ENCODE measurements at regions of chr16 and their contacts with region 1.

Region 1: GRCh38 chr16:30032083-30032819 is 1.2 kb upstream of the TLCD3B start:
- DNase-seq: peak; percentile 51 to 86
- H3K4me3 ChIP-seq: peak overlapping the region in 1 of 4 experiments; percentile 90; a peak in 3 of 8 replicates
- H3K27ac ChIP-seq: no peak overlapping the region
- H3K4me1 ChIP-seq: peaks cover 0 to 26% (median 19%) of the 10 kb centered on the region in 4 experiments; a peak in 6 of 7 replicates
- H3K27me3 ChIP-seq: peaks cover 0 to 14% (median 5%) of the 10 kb centered on the region in 4 experiments; a peak in 2 of 7 replicates
- CTCF ChIP-seq: peak; percentile 71 to 93 (median 89)
- EP300 ChIP-seq: peak in 1 of 2 experiments; percentile 20; a peak in 1 of 3 replicates
- POLR2A ChIP-seq: no peak
- RAD21 ChIP-seq: peak; percentile 92 to 95

Region 2: DNA sequence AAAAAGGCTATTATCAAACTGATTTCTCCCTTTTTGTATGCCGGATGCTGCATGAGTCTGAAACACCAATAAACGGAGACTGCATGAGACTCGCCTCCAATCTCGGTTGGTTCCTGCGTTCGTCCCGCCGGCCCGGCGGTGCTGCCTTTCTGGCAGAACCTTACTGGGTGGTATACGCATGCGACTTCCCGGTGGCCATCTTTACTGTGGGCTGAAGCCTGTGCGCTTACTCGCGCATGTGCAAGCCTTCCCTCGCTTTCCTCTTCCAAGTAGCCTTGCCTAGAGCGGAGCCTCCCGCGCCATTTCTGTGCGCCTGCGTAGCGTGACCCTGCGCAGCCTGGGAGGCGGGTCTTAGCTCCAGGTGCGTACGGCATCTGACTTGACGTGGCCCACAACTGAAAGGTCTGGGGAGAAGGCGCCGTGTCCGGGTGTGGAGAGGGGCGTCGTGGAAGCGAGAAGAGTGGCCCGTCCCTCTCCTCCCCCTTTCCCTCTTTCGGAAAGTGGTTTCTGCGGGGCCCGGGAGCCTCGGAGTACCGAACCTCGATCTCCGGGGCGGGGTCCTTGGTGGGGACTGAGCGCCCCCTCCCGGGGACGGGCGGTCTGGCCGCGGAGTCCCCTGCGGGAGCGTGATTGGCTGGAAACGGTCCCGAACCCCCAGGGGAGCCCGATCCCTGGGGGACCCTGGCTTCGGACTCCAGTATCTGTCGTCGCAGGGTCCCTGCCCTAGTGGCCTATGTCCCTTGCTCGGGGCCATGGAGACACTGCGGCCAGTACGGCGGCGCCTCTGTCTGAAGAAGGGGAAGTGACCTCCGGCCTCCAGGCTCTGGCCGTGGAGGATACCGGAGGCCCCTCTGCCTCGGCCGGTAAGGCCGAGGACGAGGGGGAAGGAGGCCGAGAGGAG is 216.2 kb before region 1 on chr16 and contains the start of gene PAGR1:
- CTCF ChIA-PET with region 1: interaction called, 13 read pairs
- POLR2A ChIA-PET with region 1: interaction called, 4 read pairs
- DNase-seq: peak; percentile 98
- H3K4me3 ChIP-seq: peak within 1 kb of the TSS; percentile 59 to 91 (median 83)
- H3K27ac ChIP-seq: peak within 1 kb of the TSS; percentile 94; the same call in 1 of the 2 replicates
- H3K4me1 ChIP-seq: peaks cover 0 to 36% (median 23%) of the 10 kb centered on the region in 4 experiments; a peak in 6 of 7 replicates
- H3K27me3 ChIP-seq: no peaks in the 10 kb centered on the region
- CTCF ChIP-seq: peak in 2 of 3 experiments; percentile 71 to 78; a peak in 3 of 4 replicates
- EP300 ChIP-seq: no peak
- POLR2A ChIP-seq: peak in 1 of 2 experiments; percentile 86; a peak in 2 of 3 replicates
- RAD21 ChIP-seq: peak; percentile 60 to 72
- total RNA-seq, gene PAGR1: 56.4 and 56.6 TPM in 2 replicates

Region 3: GRCh38 chr16:29900102-29900887 is 132.0 kb before region 1 on chr16 and contains the start of gene ASPHD1:
- CTCF ChIA-PET with region 1: interaction called, 12 read pairs
- POLR2A ChIA-PET with region 1: interaction called, 7 read pairs
- DNase-seq: peak; percentile 25 to 89
- H3K4me3 ChIP-seq: peak within 1 kb of the TSS; percentile 59 to 99 (median 90)
- H3K27ac ChIP-seq: peak within 1 kb of the TSS; percentile 67
- H3K4me1 ChIP-seq: peaks cover 0 to 14% (median 3%) of the 10 kb centered on the region in 4 experiments; a peak in 6 of 7 replicates
- H3K27me3 ChIP-seq: no peaks in the 10 kb centered on the region
- CTCF ChIP-seq: no peak
- EP300 ChIP-seq: no peak
- POLR2A ChIP-seq: no peak
- RAD21 ChIP-seq: no peak
- total RNA-seq, gene ASPHD1: 17.8 and 18.6 TPM in 2 replicates

Region 4: DNA sequence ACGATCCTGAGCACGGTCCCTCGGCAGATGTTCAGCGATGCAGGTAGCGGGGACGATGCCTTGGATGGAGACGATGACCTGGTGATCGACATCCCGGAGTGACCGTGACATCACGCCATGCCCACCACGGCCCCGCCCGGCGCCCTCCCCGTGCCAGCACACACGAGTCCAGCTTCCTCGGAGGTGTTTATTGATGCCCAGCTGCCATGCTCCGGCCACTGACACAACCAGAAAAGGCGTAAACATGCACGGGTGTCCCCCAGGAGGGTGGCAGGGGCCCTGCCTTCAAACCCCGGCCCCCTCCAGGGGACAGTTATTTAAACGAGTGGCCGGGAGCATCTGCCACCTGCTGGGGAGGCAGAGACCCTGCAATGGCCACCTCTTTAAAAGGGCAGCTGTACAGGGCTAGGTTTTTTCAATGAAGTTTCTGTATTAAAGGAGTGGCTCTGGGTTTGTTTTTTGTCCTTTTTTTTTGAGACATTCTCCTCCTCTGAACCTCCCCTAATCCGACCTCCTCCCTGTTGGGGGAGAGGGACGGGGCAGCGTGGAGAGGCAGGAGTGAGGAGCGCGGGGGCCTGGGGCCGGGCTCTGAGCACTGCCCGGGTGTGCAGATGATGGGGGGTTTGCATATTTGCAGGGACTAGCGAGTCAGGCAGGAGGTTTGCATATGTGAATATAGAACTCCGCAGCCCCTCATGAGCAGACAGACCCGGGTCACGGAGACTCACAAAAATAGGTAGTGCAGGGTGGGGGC is 26.7 kb before region 1 on chr16:
- CTCF ChIA-PET with region 1: interaction called, 18 read pairs
- POLR2A ChIA-PET with region 1: interaction called, 10 read pairs
- DNase-seq: no peak
- H3K4me3 ChIP-seq: no peak overlapping the region
- H3K27ac ChIP-seq: no peak overlapping the region
- H3K4me1 ChIP-seq: peaks cover 0 to 22% (median 11%) of the 10 kb centered on the region in 4 experiments; a peak in 6 of 7 replicates
- H3K27me3 ChIP-seq: peaks cover 0 to 13% (median 8%) of the 10 kb centered on the region in 4 experiments; a peak in 4 of 7 replicates
- CTCF ChIP-seq: peak in 2 of 3 experiments; percentile 60 to 71; a peak in 3 of 4 replicates
- EP300 ChIP-seq: no peak
- POLR2A ChIP-seq: no peak
- RAD21 ChIP-seq: peak; percentile 29 to 50; a peak in 3 of 4 replicates

Region 5: GRCh38 chr16:30018731-30019158 is 13.5 kb before region 1 on chr16:
- CTCF ChIA-PET with region 1: interaction called, 13 read pairs
- POLR2A ChIA-PET with region 1: interaction called, 6 read pairs
- DNase-seq: no peak
- H3K4me3 ChIP-seq: no peak overlapping the region
- H3K27ac ChIP-seq: no peak overlapping the region
- H3K4me1 ChIP-seq: no peaks in the 10 kb centered on the region; a peak in 1 of 7 replicates
- H3K27me3 ChIP-seq: no peaks in the 10 kb centered on the region
- CTCF ChIP-seq: no peak
- EP300 ChIP-seq: no peak
- POLR2A ChIP-seq: no peak
- RAD21 ChIP-seq: no peak

Region 6: GRCh38 chr16:30065143-30065850 is 33.0 kb after region 1 on chr16 and contains the start of gene ALDOA:
- CTCF ChIA-PET with region 1: interaction called, 16 read pairs
- POLR2A ChIA-PET with region 1: interaction called, 25 read pairs
- DNase-seq: peak; percentile 89 to 92
- H3K4me3 ChIP-seq: peak within 1 kb of the TSS; percentile 71 to 92 (median 88)
- H3K27ac ChIP-seq: peak within 1 kb of the TSS; percentile 84
- H3K4me1 ChIP-seq: peaks cover 6 to 27% (median 15%) of the 10 kb centered on the region in 4 experiments
- H3K27me3 ChIP-seq: no peaks in the 10 kb centered on the region
- CTCF ChIP-seq: no peak
- EP300 ChIP-seq: no peak; a peak in 1 of 3 replicates
- POLR2A ChIP-seq: peak; percentile 93 to 95
- RAD21 ChIP-seq: no peak
- total RNA-seq, gene ALDOA: 1,083 and 1,146 TPM in 2 replicates

Region 7: GRCh38 chr16:30183233-30184095 is 151.2 kb after region 1 on chr16 and contains the start of gene CORO1A:
- CTCF ChIA-PET with region 1: no interaction called
- POLR2A ChIA-PET with region 1: no interaction called
- DNase-seq: peak in 1 of 2 experiments; percentile 91
- H3K4me3 ChIP-seq: peak within 1 kb of the TSS; percentile 50 to 69 (median 54)
- H3K27ac ChIP-seq: no peak within 1 kb of the TSS
- H3K4me1 ChIP-seq: peaks cover 0 to 12% (median 4%) of the 10 kb centered on the region in 4 experiments; a peak in 4 of 7 replicates
- H3K27me3 ChIP-seq: peaks cover 0 to 22% (median 12%) of the 10 kb centered on the region in 4 experiments; a peak in 4 of 7 replicates
- CTCF ChIP-seq: no peak
- EP300 ChIP-seq: no peak
- POLR2A ChIP-seq: no peak; a peak in 1 of 3 replicates
- RAD21 ChIP-seq: no peak
- total RNA-seq, gene CORO1A: 11.7 and 12.1 TPM in 2 replicates